ENCODE measurements at regions of chr3 and their contacts with region 1.

Region 1: GRCh38 chr3:3200632-3201212 is 21.2 kb upstream of the CRBN start:
- DNase-seq: peak; percentile 33
- ATAC-seq: peak; percentile 66
- H3K4me3 Mint-ChIP-seq: no peak overlapping the region
- H3K27ac Mint-ChIP-seq: no peak overlapping the region
- H3K4me1 Mint-ChIP-seq: no peaks in the 10 kb centered on the region
- H3K27me3 Mint-ChIP-seq: peaks cover 8% of the 10 kb centered on the region; the same call in 1 of the 2 replicates
- CTCF ChIP-seq: peak; percentile 49

Region 2: DNA sequence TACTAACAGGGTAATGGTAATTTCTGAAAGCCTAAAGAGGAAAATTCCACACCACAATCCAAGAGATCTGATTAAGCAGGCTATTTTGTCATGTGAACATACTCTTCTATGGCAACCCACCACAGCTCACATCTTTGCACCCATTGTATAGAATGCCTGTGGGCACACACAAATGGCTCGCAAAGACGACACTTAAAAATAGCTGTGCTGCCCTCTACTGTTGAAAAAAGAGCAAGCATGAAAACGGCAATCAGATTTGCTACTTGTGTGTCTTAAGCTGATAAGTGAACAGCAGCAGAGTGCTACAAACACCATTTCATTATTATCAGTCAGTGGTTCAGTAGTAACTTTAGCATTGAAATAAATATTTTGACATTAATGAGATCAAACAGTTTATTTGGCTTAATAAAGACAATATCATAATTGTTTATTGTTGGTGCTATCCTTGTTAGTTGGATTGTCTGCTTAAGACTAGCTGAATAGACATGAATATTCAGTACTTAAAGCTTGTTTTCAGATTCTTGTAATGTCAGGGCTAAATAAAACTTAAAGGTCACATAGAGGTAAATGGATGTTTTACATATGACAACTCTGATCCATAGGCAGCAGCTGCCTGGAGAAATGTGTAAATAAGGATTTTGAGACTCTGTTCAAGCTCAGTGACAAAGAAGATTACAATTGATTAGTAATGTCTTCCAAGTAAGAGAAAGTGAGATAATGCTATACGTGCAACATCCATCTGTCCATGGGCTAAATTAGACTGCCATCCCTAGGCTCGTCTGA is 797.6 kb after region 1 on chr3:
- CTCF ChIA-PET with region 1: interaction called, 20 read pairs
- POLR2A ChIA-PET with region 1: no interaction called
- DNase-seq: peak; percentile 19
- ATAC-seq: peak; percentile 76
- H3K4me3 Mint-ChIP-seq: no peak overlapping the region
- H3K27ac Mint-ChIP-seq: no peak overlapping the region
- H3K4me1 Mint-ChIP-seq: no peaks in the 10 kb centered on the region
- H3K27me3 Mint-ChIP-seq: no peaks in the 10 kb centered on the region
- CTCF ChIP-seq: peak; percentile 61

Region 3: DNA sequence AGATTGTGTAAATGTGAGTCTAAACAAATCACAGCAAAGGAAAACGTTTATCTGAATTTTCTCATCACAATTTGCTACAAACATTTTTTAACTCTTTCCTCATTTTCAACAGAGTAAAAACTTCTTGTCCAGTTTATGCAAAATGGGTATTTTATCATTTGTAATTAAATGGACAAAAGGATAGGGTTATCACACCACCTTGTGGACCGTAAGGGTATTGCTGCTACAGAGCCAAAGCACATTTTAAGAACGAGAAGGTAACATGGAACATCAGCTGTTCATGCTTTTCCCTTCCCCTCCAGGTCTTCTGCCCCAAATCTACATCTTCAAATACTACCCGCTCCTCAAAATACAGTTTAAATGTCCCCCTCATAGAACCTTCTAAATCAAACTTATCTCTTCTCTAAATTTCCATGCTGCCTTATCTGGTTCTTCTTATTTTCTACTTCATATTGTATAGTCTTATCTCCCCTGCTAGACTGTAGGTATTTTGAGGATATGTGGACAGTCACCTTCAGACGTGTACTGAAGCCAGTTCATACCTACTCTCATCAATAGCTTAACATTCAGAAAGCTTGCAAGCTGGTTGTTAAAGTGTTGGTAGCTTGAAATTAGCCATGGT is 1089.7 kb after region 1 on chr3:
- CTCF ChIA-PET with region 1: interaction called, 13 read pairs
- POLR2A ChIA-PET with region 1: no interaction called
- DNase-seq: no peak
- ATAC-seq: peak; percentile 61; the same call in 1 of the 2 replicates
- H3K4me3 Mint-ChIP-seq: no peak overlapping the region
- H3K27ac Mint-ChIP-seq: no peak overlapping the region
- H3K4me1 Mint-ChIP-seq: peaks cover 3% of the 10 kb centered on the region; the same call in 1 of the 2 replicates
- H3K27me3 Mint-ChIP-seq: 0 out of 2 replicates have a peak, but pooled peaks cover 2% of the 10 kb centered on the region
- CTCF ChIP-seq: peak; percentile 81